ENCODE measurements at regions of chr6 and their contacts with region 1.

Region 1: GRCh38 chr6:44041461-44042260 is 85.6 kb downstream of the MRPL14 start:
- DNase-seq: peak; percentile 86 to 94
- H3K4me3 ChIP-seq: peak overlapping the region; percentile 49; the same call in 1 of the 2 replicates
- H3K27ac ChIP-seq: peak overlapping the region; percentile 99
- H3K4me1 ChIP-seq: peaks cover 82% of the 10 kb centered on the region
- H3K27me3 ChIP-seq: no peaks in the 10 kb centered on the region
- CTCF ChIP-seq: no peak; the same call in 1 of the 2 replicates

Region 2: DNA sequence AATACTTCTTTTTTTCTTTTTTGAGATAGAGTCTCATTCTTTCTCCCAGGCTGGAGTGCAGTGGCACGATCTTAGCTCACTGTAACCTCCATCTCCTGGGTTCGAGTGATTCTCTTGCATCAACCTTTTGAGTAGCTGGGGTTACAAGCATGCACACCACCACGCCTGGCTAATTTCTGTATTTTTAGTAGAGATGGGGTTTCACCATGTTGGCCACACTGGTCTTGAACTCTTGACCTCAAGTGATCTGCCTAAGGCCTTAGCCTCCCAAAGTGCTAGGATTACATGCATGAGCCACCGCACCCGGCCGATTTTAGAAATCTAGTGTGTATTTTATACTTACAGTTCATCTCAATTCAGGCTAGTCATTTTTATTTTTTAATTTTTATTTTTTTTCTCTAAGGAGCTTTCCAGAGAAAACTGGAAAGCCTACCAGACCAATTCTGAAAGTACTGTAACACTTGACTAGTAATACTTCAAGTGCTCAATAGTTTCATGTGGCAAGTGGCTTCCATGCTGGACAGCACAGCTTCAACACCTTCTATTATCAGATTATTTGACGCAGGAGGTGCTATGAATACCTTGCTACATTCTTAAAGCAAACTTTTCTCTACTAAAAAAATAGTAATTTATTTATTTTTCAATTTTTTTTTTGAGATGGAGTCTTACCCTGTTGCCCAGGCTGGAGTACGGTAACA is 499.7 kb before region 1 on chr6:
- CTCF ChIA-PET with region 1: no interaction called
- POLR2A ChIA-PET with region 1: interaction called, 10 read pairs
- intact Hi-C with region 1: no loop called
- DNase-seq: no peak
- H3K4me3 ChIP-seq: no peak overlapping the region
- H3K27ac ChIP-seq: no peak overlapping the region
- H3K4me1 ChIP-seq: no peaks in the 10 kb centered on the region
- H3K27me3 ChIP-seq: no peaks in the 10 kb centered on the region
- CTCF ChIP-seq: no peak

Region 3: DNA sequence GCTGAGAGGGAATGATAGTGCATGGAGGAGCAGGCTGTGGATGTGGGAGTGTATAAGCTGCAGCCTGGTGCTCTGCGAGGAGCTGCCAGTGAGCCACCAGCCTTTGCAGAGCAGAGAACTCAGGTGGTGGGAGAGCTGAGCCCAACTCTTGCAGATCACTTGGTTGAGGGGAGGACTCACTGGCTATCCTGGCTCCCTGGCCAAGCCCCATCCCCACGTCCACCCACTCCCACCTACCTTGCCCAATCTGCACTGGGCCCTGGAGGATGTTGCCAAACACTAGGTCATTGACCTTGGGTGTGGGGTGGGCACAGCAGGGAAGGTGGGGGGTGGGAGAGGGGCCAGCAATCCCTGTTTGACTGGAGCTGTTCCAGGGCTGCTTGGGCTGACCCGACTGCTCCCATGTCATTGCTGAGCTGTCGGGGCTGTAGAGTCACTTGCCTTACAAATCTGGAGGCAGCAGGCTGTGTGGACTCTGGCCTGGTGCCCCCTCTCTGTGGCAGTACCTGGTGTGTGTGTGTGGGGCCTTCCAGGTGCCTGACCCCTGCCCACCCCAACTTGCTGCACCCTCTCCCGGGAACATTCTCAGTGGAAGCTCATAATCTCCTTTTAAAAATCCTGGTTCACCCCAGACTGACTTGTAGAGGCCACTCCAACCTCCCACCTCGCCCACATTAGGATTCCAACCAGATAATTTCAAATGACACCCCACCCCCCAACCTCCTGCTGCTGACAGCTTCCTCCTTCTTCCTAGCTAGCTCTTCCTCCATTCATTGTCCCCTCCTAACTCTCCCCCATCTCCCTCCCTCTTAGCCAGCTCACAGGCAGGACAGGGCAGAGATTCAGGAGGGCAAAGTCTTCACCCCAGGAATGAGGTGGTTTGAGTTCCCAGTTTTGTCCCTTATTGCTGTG is 76.7 kb before region 1 on chr6:
- CTCF ChIA-PET with region 1: no interaction called
- POLR2A ChIA-PET with region 1: interaction called, 10 read pairs
- intact Hi-C with region 1: no loop called
- DNase-seq: no peak
- H3K4me3 ChIP-seq: no peak overlapping the region
- H3K27ac ChIP-seq: no peak overlapping the region
- H3K4me1 ChIP-seq: peaks cover 5% of the 10 kb centered on the region; the same call in 1 of the 2 replicates
- H3K27me3 ChIP-seq: no peaks in the 10 kb centered on the region
- CTCF ChIP-seq: no peak

Region 4: DNA sequence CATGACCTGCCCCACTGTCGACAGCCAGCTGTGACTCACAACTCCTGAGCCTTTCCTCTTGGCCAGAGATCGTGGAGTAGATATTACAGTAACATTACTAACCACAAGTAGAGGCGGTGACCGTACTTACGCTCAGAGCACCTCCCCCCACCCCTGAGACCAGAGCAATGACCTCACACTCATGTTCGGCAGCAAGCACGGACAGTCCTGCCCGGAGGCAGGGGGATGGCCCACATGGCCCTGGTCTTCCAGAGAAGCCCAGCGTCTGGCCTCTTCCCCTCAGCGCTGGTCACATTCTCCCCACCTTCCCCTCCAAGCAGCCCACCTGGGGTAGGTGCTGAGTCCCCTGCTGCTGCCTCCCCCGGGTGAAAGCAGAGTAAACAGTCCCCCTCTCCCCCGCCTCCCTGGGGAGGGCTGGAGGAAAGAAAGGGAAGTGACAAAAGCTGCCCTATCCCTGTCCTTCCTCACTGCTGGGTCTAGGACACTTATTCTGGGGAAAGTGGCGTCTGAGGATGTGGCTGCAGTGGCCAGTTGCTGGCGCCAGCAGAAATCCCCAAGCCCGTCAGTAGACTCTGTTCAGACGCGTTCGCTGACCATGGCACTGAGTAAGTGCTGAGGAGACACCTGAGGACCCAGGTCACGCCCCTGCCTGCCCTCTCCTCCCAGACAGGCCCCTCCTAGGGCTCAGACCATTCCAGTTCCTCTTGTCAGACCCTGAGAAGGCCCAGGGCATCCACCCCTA is 17.1 kb after region 1 on chr6:
- CTCF ChIA-PET with region 1: interaction called, 3 read pairs
- POLR2A ChIA-PET with region 1: interaction called, 4 read pairs
- intact Hi-C with region 1: loop called (anchors 1 kb)
- DNase-seq: peak; percentile 89 to 99
- H3K4me3 ChIP-seq: peak overlapping the region; percentile 25; the same call in 1 of the 2 replicates
- H3K27ac ChIP-seq: peak overlapping the region; percentile 95
- H3K4me1 ChIP-seq: peaks cover 86% of the 10 kb centered on the region
- H3K27me3 ChIP-seq: no peaks in the 10 kb centered on the region
- CTCF ChIP-seq: no peak

Measured in PC-9 (cell line).